Ascending aorta (tissue), 2 donors: ENCODE measurements at regions of chr6 and their contacts with region 1.

Region 1: GRCh38 chr6:13574149-13574570 is 241 bp upstream of the SIRT5 start:
- DNase-seq: peak; percentile 72 to 93
- H3K4me3 ChIP-seq: peak overlapping the region; percentile 78 to 80
- H3K27ac ChIP-seq: peak overlapping the region; percentile 88 to 93
- H3K4me1 ChIP-seq: peaks cover 0 to 3% of the 10 kb centered on the region in 2 donors
- H3K27me3 ChIP-seq: no peaks in the 10 kb centered on the region
- CTCF ChIP-seq: peak in 2 of 3 experiments; percentile 54 to 56

Region 2: GRCh38 chr6:13101985-13102384 is 472.2 kb before region 1 on chr6:
- intact Hi-C with region 1: no loop called
- DNase-seq: no peak
- H3K4me3 ChIP-seq: no peak overlapping the region
- H3K27ac ChIP-seq: no peak overlapping the region
- H3K4me1 ChIP-seq: peaks cover 3 to 30% of the 10 kb centered on the region in 2 donors
- H3K27me3 ChIP-seq: no peaks in the 10 kb centered on the region
- CTCF ChIP-seq: no peak

Region 3: DNA sequence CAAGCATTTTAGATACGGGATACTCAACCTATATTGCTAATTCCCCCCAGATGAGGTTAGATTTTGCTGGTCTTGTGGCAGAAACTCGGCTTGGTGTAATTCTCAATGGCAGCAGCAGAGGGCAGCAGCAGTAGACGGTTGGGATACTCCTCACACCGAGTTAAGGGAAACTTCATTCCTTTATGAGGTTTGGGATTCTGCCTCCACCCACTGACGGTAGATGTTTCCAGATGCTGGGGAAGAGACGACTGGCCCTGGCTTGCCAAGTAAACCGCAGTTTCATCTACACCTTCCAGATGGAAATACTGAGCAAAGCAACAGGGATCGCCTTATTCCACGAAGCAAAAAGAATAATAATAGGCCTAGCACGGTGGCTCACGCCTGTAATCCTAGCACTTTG is 237.6 kb before region 1 on chr6:
- intact Hi-C with region 1: loop called (anchors 1 kb)
- DNase-seq: peak; percentile 14 to 80
- H3K4me3 ChIP-seq: no peak overlapping the region
- H3K27ac ChIP-seq: no peak overlapping the region
- H3K4me1 ChIP-seq: no peaks in the 10 kb centered on the region
- H3K27me3 ChIP-seq: no peaks in the 10 kb centered on the region
- CTCF ChIP-seq: peak; percentile 84 to 96 (median 91)

Region 4: GRCh38 chr6:13413900-13414555 is 160.1 kb before region 1 on chr6:
- intact Hi-C with region 1: loop called (anchors 2 kb)
- DNase-seq: peak; percentile 25 to 91
- H3K4me3 ChIP-seq: no peak overlapping the region
- H3K27ac ChIP-seq: peak overlapping the region; percentile 88 to 94
- H3K4me1 ChIP-seq: peaks cover 5 to 35% of the 10 kb centered on the region in 2 donors
- H3K27me3 ChIP-seq: no peaks in the 10 kb centered on the region
- CTCF ChIP-seq: no peak

Region 5: DNA sequence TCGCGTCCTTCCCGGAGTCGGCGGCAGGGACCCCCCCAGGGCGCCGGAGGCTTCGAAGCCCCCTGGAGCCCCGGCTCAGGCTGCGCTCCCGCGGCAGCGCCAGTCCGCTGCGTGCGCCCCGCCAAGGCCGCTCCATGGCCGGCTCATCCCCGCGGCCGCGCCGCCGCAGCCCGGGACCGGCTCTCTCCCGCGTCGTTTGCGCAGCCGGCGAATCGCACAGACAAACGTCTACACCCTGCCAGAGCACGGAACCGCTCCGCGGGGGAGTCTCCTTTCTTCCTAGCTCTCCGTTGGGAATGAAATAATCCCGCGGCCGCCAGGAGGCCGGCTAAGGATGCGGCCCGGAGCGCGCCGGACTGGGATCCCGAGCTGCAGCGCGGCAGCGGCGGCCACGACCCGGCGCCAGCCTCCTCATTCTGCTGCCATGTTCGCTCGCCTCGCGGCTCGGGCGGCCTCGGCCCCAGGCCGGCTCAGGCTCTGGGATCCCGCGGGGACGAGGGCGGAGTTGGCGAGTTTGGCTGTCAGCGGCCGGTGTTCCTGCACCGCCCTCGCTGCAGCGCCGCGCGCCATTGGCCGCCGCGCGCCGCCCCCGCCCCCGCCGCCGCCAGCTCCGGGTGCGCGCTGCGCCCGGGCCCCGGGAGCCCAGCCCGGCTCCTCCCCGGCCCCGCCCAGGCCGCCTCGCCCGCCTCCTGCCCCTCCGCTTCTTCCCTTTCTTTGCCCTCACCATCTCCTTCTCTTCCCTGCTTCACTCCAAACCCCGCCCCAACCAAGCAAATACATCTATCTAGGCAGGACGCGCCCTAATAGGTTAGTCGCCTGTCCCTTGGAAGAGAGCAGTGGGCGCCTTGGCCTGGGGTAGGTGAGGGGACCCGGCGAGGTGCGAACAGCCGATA is 86.8 kb before region 1 on chr6 and contains the start of gene GFOD1:
- intact Hi-C with region 1: loop called (anchors 5 kb)
- DNase-seq: peak; percentile 50 to 93
- H3K4me3 ChIP-seq: peak within 1 kb of the TSS; percentile 90 to 94
- H3K27ac ChIP-seq: peak within 1 kb of the TSS; percentile 89 to 96
- H3K4me1 ChIP-seq: peaks cover 4% of the 10 kb centered on the region in 2 donors
- H3K27me3 ChIP-seq: no peaks in the 10 kb centered on the region
- CTCF ChIP-seq: peak in 1 of 3 experiments; percentile 9
- total RNA-seq, gene GFOD1: 28.7 TPM

Region 6: DNA sequence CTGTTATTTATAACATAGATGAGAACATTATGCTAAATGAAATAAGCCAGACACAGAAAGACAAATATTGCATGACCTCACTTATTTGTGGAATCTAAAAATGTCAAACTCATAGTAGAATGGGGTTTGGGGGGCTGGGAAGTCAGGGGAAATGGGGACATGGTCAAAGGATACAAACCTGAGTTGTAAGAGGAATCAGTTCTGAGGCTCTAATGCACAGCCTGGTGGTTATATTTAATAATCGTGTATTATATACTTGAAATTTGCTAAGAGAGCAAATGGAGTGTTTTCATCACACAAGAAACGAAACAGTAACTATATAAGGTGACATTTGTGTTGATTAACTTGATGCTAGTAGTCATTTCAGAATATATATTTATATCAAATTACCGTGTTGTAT is 45.9 kb before region 1 on chr6:
- intact Hi-C with region 1: no loop called
- DNase-seq: no peak
- H3K4me3 ChIP-seq: no peak overlapping the region
- H3K27ac ChIP-seq: no peak overlapping the region
- H3K4me1 ChIP-seq: no peaks in the 10 kb centered on the region
- H3K27me3 ChIP-seq: no peaks in the 10 kb centered on the region
- CTCF ChIP-seq: peak; percentile 5 to 28 (median 9)

Region 7: GRCh38 chr6:13614926-13615798 is 41.0 kb after region 1 on chr6 and contains the start of gene NOL7:
- intact Hi-C with region 1: loop called (anchors 1 kb)
- DNase-seq: peak; percentile 84 to 98
- H3K4me3 ChIP-seq: peak within 1 kb of the TSS; percentile 82 to 97
- H3K27ac ChIP-seq: peak within 1 kb of the TSS; percentile 92 to 95
- H3K4me1 ChIP-seq: peaks cover 0 to 17% of the 10 kb centered on the region in 2 donors
- H3K27me3 ChIP-seq: no peaks in the 10 kb centered on the region
- CTCF ChIP-seq: peak; percentile 83 to 96 (median 87)
- total RNA-seq, gene NOL7: 32.2 TPM

Region 8: DNA sequence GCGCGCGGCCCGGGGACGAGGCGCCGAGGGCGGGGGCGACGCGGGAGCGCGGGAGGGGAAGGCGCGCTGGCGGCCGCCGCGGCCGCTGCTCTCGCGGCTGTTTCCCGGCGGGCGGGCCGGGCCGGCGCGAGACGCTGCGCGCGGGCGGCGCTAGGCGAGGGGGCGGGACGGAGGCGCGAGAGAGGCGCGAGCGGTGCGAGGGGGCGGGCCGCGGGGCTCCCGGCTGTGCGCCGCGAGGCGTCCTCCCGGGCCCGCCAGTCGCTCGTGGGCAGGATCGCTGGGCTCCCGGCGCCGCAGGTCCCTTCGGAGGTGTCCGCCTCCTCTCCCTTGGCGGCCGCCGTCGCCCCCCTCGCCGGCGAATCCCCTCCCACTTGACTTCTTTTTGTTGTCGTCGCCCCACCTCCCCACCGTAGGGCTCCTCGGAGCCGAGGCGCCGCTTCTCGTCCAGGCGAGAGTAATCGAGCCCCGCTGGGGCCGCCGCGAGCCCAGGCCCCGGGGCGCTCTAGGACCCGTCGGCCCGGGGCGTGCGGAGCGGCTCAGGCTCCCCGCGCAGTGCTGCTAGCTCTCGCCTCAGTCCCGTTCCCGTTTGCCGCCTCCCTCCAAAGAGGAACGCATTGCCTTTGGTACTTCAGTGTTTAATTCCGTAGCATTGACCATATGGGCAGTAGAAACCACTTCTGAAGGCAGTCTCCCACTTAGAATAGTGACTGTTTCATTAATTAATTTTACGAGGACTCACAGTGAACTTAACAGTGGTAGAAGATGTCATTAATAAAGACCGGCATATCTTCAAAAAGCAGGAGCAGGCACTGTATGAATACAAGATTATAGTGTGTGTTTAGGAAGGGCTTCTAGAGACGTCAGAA is 137.8 kb after region 1 on chr6 and contains the start of gene RANBP9:
- intact Hi-C with region 1: loop called (anchors 2 kb)
- DNase-seq: peak; percentile 54 to 93
- H3K4me3 ChIP-seq: peak within 1 kb of the TSS; percentile 91 to 95
- H3K27ac ChIP-seq: peak within 1 kb of the TSS; percentile 98 to 100
- H3K4me1 ChIP-seq: peaks cover 0 to 20% of the 10 kb centered on the region in 2 donors
- H3K27me3 ChIP-seq: no peaks in the 10 kb centered on the region
- CTCF ChIP-seq: peak in 2 of 3 experiments; percentile 0 to 6
- total RNA-seq, gene RANBP9: 26.3 TPM

Region 9: DNA sequence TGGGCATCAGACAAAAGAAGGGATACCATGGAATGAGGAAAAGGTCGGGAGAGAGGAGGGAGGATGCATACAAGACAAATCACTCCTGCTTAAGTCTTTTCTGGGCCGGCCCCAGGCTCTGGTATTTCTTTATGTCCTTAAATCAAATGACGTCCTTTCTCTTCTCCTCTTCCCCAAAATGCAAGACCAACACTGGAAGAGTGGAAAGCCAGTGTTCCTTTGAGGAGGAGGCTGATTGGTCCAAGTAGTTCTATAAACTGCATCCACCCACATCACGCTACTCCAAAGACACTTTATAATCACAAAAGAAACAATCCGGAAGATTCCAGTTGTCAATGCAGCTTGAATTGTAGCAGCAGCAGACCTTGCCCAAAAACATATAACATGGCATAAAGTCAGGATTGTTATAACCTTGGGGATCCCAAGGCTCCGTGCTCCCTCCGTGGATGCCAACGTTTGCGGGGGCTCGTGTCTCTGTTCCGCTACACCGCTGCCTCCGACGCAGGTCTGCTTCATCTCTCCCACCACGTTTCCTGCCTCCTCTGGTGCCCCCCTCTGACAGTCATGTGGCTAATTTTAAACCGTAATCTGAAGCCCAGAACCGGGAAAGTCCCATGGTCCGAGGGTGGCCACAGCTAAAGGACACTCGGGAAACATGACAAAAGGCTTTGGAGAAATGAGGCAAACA is 193.1 kb after region 1 on chr6:
- intact Hi-C with region 1: loop called (anchors 2 kb)
- DNase-seq: peak in 1 of 2 donors; percentile 84
- H3K4me3 ChIP-seq: peak overlapping the region; percentile 20 to 54
- H3K27ac ChIP-seq: peak overlapping the region; percentile 15 to 16
- H3K4me1 ChIP-seq: peaks cover 0 to 25% of the 10 kb centered on the region in 2 donors
- H3K27me3 ChIP-seq: no peaks in the 10 kb centered on the region
- CTCF ChIP-seq: peak; percentile 9 to 41 (median 23)